IMR-90 (cell line): ENCODE measurements at regions of chr6 and their contacts with region 1.

Region 1: GRCh38 chr6:142200846-142201628 is 54.0 kb downstream of the VTA1 start:
- DNase-seq: no peak
- ATAC-seq: no peak
- H3K4me3 ChIP-seq: no peak overlapping the region
- H3K27ac ChIP-seq: no peak overlapping the region
- H3K4me1 ChIP-seq: no peaks in the 10 kb centered on the region
- H3K27me3 ChIP-seq: no peaks in the 10 kb centered on the region
- CTCF ChIP-seq: no peak
- POLR2A ChIP-seq: no peak
- RAD21 ChIP-seq: no peak

Region 2: GRCh38 chr6:142167486-142167885 is 33.6 kb before region 1 on chr6:
- CTCF ChIA-PET with region 1: interaction called, 3 read pairs
- POLR2A ChIA-PET with region 1: no interaction called
- dilution Hi-C with region 1: no loop called
- in situ Hi-C with region 1: no loop called
- intact Hi-C with region 1: loop called (anchors 5 kb)
- DNase-seq: no peak
- ATAC-seq: no peak
- H3K4me3 ChIP-seq: no peak overlapping the region
- H3K27ac ChIP-seq: no peak overlapping the region
- H3K4me1 ChIP-seq: no peaks in the 10 kb centered on the region
- H3K27me3 ChIP-seq: no peaks in the 10 kb centered on the region
- CTCF ChIP-seq: no peak
- POLR2A ChIP-seq: no peak
- RAD21 ChIP-seq: no peak